ENCODE measurements at regions of chr1 and their contacts with region 1.

Region 1: GRCh38 chr1:151340870-151341754 is 5.9 kb downstream of the RFX5 start:
- DNase-seq: no peak
- ATAC-seq: peak; percentile 88
- H3K4me3 ChIP-seq: no peak overlapping the region
- H3K27ac ChIP-seq: no peak overlapping the region
- H3K4me1 ChIP-seq: no peaks in the 10 kb centered on the region; the same call in 1 of the 2 replicates
- H3K27me3 ChIP-seq: no peaks in the 10 kb centered on the region
- CTCF ChIP-seq: peak; percentile 63 to 78 (median 71)
- EP300 ChIP-seq: no peak
- POLR2A ChIP-seq: no peak; the same call in 1 of the 2 replicates
- RAD21 ChIP-seq: peak; percentile 77

Region 2: GRCh38 chr1:151198255-151199127 is 142.6 kb before region 1 on chr1 and contains the start of gene PIP5K1A:
- CTCF ChIA-PET with region 1: interaction called, 18 read pairs
- POLR2A ChIA-PET with region 1: no interaction called
- RAD21 ChIA-PET with region 1: interaction called, 4 read pairs
- SMC1A ChIA-PET with region 1: no interaction called
- in situ Hi-C with region 1: loop called (anchors 5 kb)
- intact Hi-C with region 1: loop called (anchors 2 kb)
- DNase-seq: peak; percentile 93
- ATAC-seq: peak; percentile 92
- H3K4me3 ChIP-seq: peak within 1 kb of the TSS; percentile 98
- H3K27ac ChIP-seq: peak within 1 kb of the TSS; percentile 82
- H3K4me1 ChIP-seq: peaks cover 4% of the 10 kb centered on the region; the same call in 1 of the 2 replicates
- H3K27me3 ChIP-seq: no peaks in the 10 kb centered on the region
- CTCF ChIP-seq: no peak
- EP300 ChIP-seq: peak in 1 of 2 experiments; percentile 36; a peak in 1 of 4 replicates
- POLR2A ChIP-seq: peak; percentile 86
- RAD21 ChIP-seq: no peak
- polyA plus RNA-seq, gene PIP5K1A: 4.5 to 5.8 TPM

Region 3: GRCh38 chr1:151281969-151282882 is 58.9 kb before region 1 on chr1 and contains the start of gene ZNF687:
- CTCF ChIA-PET with region 1: interaction called, 18 read pairs
- POLR2A ChIA-PET with region 1: interaction called, 4 read pairs
- RAD21 ChIA-PET with region 1: interaction called, 9 read pairs
- SMC1A ChIA-PET with region 1: interaction called, 7 read pairs
- in situ Hi-C with region 1: no loop called
- intact Hi-C with region 1: loop called (anchors 1 kb)
- DNase-seq: peak; percentile 99
- ATAC-seq: peak; percentile 94
- H3K4me3 ChIP-seq: peak within 1 kb of the TSS; percentile 99
- H3K27ac ChIP-seq: peak within 1 kb of the TSS; percentile 100
- H3K4me1 ChIP-seq: peaks cover 21% of the 10 kb centered on the region
- H3K27me3 ChIP-seq: no peaks in the 10 kb centered on the region
- CTCF ChIP-seq: no peak
- EP300 ChIP-seq: 0 out of 4 replicates have a peak, but pooled peaks of 1 of the 2 experiments have one; percentile 4
- POLR2A ChIP-seq: peak; percentile 84
- RAD21 ChIP-seq: no peak
- polyA plus RNA-seq, gene ZNF687: 0.08 to 0.51 TPM

Region 4: GRCh38 chr1:151311589-151312331 is 29.4 kb before region 1 on chr1:
- CTCF ChIA-PET with region 1: interaction called, 17 read pairs
- POLR2A ChIA-PET with region 1: interaction called, 3 read pairs
- RAD21 ChIA-PET with region 1: interaction called, 18 read pairs
- SMC1A ChIA-PET with region 1: interaction called, 15 read pairs
- in situ Hi-C with region 1: no loop called
- intact Hi-C with region 1: no loop called
- DNase-seq: no peak
- ATAC-seq: 0 out of 3 replicates have a peak, but pooled peaks have one; percentile 21
- H3K4me3 ChIP-seq: no peak overlapping the region
- H3K27ac ChIP-seq: no peak overlapping the region
- H3K4me1 ChIP-seq: no peaks in the 10 kb centered on the region
- H3K27me3 ChIP-seq: no peaks in the 10 kb centered on the region
- CTCF ChIP-seq: no peak
- EP300 ChIP-seq: no peak
- POLR2A ChIP-seq: no peak; the same call in 1 of the 2 replicates
- RAD21 ChIP-seq: no peak

Region 5: DNA sequence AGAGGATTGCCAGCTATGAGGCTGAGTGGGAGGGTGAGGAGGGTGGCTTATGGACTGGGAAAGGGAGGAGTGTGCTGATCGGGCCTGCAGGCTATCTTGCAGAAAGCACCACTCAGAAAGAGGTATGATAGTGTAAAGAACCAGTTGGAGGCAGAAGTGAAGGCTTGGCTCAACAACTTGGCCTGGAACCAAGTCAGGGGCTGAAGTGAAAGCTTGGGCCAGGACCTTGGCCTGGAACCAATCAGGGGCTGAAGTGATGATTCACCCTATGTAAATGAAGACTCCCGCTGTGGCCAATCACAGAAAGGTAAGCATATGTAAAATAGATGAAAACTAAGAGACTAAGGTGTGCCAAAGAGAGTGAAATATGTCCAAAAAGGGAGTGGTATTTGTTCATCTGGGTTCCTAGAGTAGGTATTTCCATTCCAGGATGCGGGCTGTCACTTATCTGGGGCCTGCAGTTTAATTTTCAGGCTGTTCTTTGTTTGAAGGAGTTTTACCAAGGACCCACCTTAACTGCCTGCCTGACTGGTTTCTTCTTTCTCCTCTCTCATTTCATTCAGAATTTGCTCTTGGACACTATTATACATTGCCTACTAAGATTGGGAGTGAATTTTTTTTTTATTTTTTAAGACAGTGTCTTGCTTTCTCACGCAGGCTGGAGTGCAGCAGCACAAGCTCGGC is 11.0 kb after region 1 on chr1:
- CTCF ChIA-PET with region 1: interaction called, 26 read pairs
- POLR2A ChIA-PET with region 1: interaction called, 4 read pairs
- RAD21 ChIA-PET with region 1: no interaction called
- SMC1A ChIA-PET with region 1: interaction called, 7 read pairs
- in situ Hi-C with region 1: no loop called
- intact Hi-C with region 1: no loop called
- DNase-seq: no peak
- ATAC-seq: no peak
- H3K4me3 ChIP-seq: no peak overlapping the region
- H3K27ac ChIP-seq: no peak overlapping the region
- H3K4me1 ChIP-seq: peaks cover 7% of the 10 kb centered on the region
- H3K27me3 ChIP-seq: no peaks in the 10 kb centered on the region
- CTCF ChIP-seq: no peak
- EP300 ChIP-seq: no peak
- POLR2A ChIP-seq: no peak
- RAD21 ChIP-seq: no peak

Region 6: GRCh38 chr1:151399890-151400495 is 58.9 kb after region 1 on chr1:
- CTCF ChIA-PET with region 1: interaction called, 21 read pairs
- POLR2A ChIA-PET with region 1: interaction called, 8 read pairs
- RAD21 ChIA-PET with region 1: interaction called, 7 read pairs
- SMC1A ChIA-PET with region 1: interaction called, 18 read pairs
- in situ Hi-C with region 1: no loop called
- intact Hi-C with region 1: loop called (anchors 2 kb)
- DNase-seq: no peak
- ATAC-seq: peak; percentile 42
- H3K4me3 ChIP-seq: peak overlapping the region; percentile 88
- H3K27ac ChIP-seq: peak overlapping the region; percentile 83
- H3K4me1 ChIP-seq: peaks cover 9% of the 10 kb centered on the region
- H3K27me3 ChIP-seq: no peaks in the 10 kb centered on the region
- CTCF ChIP-seq: no peak
- EP300 ChIP-seq: no peak
- POLR2A ChIP-seq: no peak; the same call in 1 of the 2 replicates
- RAD21 ChIP-seq: no peak